Activated T-helper 1 cell treated with anti-CD3 and anti-CD28 coated beads, Interleukin-12 subunit alpha, Interleukin-12 subunit beta, Interleukin-2, Interleukin-4 antibody, amounts not matched to agents 30 ng/mL and 10 ng/mL and 1 ng/mL, durations not matched to agents 14 hours and 24 hours and 36 hours (primary cell): ENCODE measurements at regions of chr15 and their contacts with region 1.

Region 1: DNA sequence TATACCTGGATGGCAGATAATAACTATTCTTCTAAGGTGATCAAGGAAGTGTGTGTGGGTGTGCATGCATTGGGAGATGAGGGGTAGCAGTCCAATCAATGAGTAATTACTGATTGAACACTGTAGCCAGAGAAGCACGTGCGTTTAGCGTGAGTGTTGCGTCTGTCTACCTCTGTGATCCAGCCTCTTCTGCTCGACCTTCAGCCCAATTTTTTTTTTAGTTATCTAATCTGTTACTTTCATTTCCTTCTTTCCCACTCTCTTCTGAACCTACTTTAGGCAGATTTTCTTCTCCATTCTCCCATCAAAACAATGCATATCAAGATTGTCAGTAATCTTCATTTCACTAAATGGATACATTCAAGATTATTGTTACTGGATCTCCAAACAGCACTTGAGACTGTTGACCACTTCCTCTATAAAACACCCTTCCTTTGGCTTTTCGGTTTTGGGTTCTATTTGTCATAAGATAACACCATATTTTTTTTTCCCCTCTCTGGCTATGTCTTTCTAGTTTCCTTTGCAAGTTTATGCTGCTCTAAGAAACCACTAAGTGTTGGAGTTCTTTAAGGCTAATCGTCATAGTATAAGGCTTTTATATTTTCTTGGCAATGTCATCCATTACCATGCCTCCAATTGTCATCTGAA is 41.0 kb downstream of the MCTP2 start:
- DNase-seq: no peak
- H3K4me3 Mint-ChIP-seq: no peak overlapping the region
- H3K27ac Mint-ChIP-seq: no peak overlapping the region
- H3K4me1 Mint-ChIP-seq: peaks cover 12% of the 10 kb centered on the region
- H3K27me3 Mint-ChIP-seq: no peaks in the 10 kb centered on the region

Region 2: GRCh38 chr15:94196531-94196930 is 75.8 kb before region 1 on chr15:
- intact Hi-C with region 1: no loop called
- DNase-seq: no peak
- H3K4me3 Mint-ChIP-seq: no peak overlapping the region
- H3K27ac Mint-ChIP-seq: no peak overlapping the region
- H3K4me1 Mint-ChIP-seq: no peaks in the 10 kb centered on the region
- H3K27me3 Mint-ChIP-seq: no peaks in the 10 kb centered on the region

Region 3: GRCh38 chr15:94206463-94207167 is 65.8 kb before region 1 on chr15:
- intact Hi-C with region 1: loop called (anchors 1 kb)
- DNase-seq: peak; percentile 69
- H3K4me3 Mint-ChIP-seq: peak overlapping the region; percentile 79
- H3K27ac Mint-ChIP-seq: peak overlapping the region; percentile 97
- H3K4me1 Mint-ChIP-seq: peaks cover 41% of the 10 kb centered on the region
- H3K27me3 Mint-ChIP-seq: no peaks in the 10 kb centered on the region

Region 4: GRCh38 chr15:94282269-94283250 is 10.2 kb after region 1 on chr15:
- intact Hi-C with region 1: loop called (anchors 1 kb)
- DNase-seq: no peak
- H3K4me3 Mint-ChIP-seq: peak overlapping the region; percentile 21
- H3K27ac Mint-ChIP-seq: peak overlapping the region; percentile 81
- H3K4me1 Mint-ChIP-seq: peaks cover 88% of the 10 kb centered on the region
- H3K27me3 Mint-ChIP-seq: no peaks in the 10 kb centered on the region

Region 5: GRCh38 chr15:94306700-94307650 is 34.6 kb after region 1 on chr15:
- intact Hi-C with region 1: loop called (anchors 1 kb)
- DNase-seq: peak; percentile 36
- H3K4me3 Mint-ChIP-seq: peak overlapping the region; percentile 38
- H3K27ac Mint-ChIP-seq: peak overlapping the region; percentile 98
- H3K4me1 Mint-ChIP-seq: peaks cover 79% of the 10 kb centered on the region
- H3K27me3 Mint-ChIP-seq: no peaks in the 10 kb centered on the region

Region 6: DNA sequence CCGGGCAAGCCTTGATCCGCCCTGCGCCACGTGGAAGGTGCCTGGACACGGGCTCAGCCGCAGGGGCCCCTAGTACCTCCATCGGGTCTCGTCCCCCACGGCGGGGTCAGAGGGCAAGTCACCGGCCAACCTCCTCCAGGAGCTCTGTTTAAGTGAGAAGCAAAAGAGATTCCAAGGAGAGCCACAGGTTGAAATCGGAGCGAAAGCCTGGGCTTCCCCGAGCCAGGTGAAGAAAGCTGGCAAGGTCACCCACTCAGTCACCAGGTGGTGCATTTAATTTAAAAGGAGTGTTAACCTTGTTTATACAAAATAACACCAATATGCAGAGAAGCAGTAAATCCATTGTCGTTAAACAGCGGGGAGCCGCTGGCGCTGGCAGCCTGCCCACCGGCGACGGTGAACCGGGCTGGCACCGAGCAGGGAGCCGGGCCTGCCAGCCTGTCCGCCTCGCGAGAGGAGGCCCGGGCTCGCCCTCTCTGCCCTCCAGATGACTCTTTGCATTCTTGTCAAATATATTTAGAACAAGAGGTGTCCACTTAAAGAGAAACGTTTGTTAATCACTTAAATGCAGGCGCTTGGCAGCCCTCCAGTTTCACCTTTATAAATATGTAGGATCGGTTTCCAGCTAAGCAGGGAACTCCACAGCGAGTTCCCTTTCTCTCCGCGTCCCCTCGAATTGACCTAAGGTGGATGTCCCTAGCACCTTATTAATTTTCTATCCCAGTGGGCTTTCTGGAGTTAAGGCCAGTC is 1780.8 kb after region 1 on chr15:
- intact Hi-C with region 1: loop called (anchors 5 kb)
- DNase-seq: no peak
- H3K4me3 Mint-ChIP-seq: no peak overlapping the region
- H3K27ac Mint-ChIP-seq: no peak overlapping the region
- H3K4me1 Mint-ChIP-seq: peaks cover 5% of the 10 kb centered on the region
- H3K27me3 Mint-ChIP-seq: peaks cover 57% of the 10 kb centered on the region